PC-9 (cell line): ENCODE measurements at regions of chr6 and their contacts with region 1.

Region 1: DNA sequence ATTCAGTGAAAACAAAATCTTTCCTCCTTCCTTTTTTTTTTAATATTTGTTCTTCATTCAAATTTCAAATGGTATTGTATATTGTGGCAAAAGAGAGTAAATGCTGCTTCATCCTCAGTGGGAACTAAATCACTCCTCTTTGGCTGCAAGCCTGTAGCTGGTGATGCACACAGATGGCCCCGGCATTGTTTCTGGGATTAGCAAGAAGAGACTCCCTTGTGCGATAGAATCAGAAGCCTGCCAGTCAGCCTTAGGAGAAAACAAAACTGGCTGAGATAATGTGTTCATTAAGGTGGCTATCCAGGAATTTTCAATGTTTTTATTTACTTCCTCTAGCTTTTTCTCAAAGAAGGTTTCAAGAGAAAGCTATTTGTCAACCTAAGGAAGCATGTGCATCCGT is 20.7 kb upstream of the ELOVL2 start:
- DNase-seq: no peak
- H3K4me3 ChIP-seq: no peak overlapping the region
- H3K27ac ChIP-seq: no peak overlapping the region
- H3K4me1 ChIP-seq: no peaks in the 10 kb centered on the region
- H3K27me3 ChIP-seq: no peaks in the 10 kb centered on the region
- CTCF ChIP-seq: no peak

Region 2: GRCh38 chr6:9380568-9380967 is 1684.3 kb before region 1 on chr6:
- CTCF ChIA-PET with region 1: interaction called, 18 read pairs
- POLR2A ChIA-PET with region 1: no interaction called
- intact Hi-C with region 1: no loop called
- DNase-seq: no peak
- H3K4me3 ChIP-seq: no peak overlapping the region
- H3K27ac ChIP-seq: no peak overlapping the region
- H3K4me1 ChIP-seq: no peaks in the 10 kb centered on the region
- H3K27me3 ChIP-seq: no peaks in the 10 kb centered on the region
- CTCF ChIP-seq: no peak

Region 3: GRCh38 chr6:10478187-10479040 is 586.4 kb before region 1 on chr6:
- CTCF ChIA-PET with region 1: interaction called, 7 read pairs
- POLR2A ChIA-PET with region 1: no interaction called
- intact Hi-C with region 1: loop called (anchors 1 kb)
- DNase-seq: peak; percentile 8 to 37
- H3K4me3 ChIP-seq: no peak overlapping the region
- H3K27ac ChIP-seq: no peak overlapping the region
- H3K4me1 ChIP-seq: peaks cover 11% of the 10 kb centered on the region
- H3K27me3 ChIP-seq: no peaks in the 10 kb centered on the region
- CTCF ChIP-seq: peak; percentile 78

Region 4: GRCh38 chr6:10800829-10801535 is 263.9 kb before region 1 on chr6:
- CTCF ChIA-PET with region 1: no interaction called
- POLR2A ChIA-PET with region 1: no interaction called
- intact Hi-C with region 1: loop called (anchors 10 kb)
- DNase-seq: peak; percentile 66 to 70
- H3K4me3 ChIP-seq: no peak overlapping the region
- H3K27ac ChIP-seq: peak overlapping the region; percentile 41; the same call in 1 of the 2 replicates
- H3K4me1 ChIP-seq: peaks cover 8% of the 10 kb centered on the region
- H3K27me3 ChIP-seq: no peaks in the 10 kb centered on the region
- CTCF ChIP-seq: peak; percentile 94

Region 5: DNA sequence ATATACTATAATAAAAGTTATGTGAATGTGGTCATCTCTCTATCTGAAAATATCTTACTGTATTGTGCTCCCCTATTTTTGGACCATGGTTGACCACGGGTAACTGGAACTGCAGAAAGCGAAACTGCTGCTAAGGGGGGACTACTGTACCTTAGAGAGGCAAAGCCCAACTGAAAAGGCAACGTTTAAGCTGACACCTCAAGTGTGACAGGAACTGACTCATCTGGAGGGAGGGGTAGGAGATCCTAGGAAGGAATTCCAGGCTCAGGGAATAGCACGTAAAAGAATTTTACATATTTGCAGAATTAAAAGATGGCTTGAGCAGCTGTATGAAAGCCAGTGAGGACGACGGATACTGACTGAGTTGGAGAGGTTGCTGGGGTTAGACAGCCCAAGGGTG is 55.5 kb before region 1 on chr6:
- CTCF ChIA-PET with region 1: no interaction called
- POLR2A ChIA-PET with region 1: no interaction called
- intact Hi-C with region 1: loop called (anchors 2 kb)
- DNase-seq: peak in 1 of 2 experiments; percentile 13
- H3K4me3 ChIP-seq: no peak overlapping the region
- H3K27ac ChIP-seq: no peak overlapping the region
- H3K4me1 ChIP-seq: peaks cover 28% of the 10 kb centered on the region
- H3K27me3 ChIP-seq: no peaks in the 10 kb centered on the region
- CTCF ChIP-seq: no peak

Region 6: GRCh38 chr6:11575408-11576033 is 510.7 kb after region 1 on chr6:
- CTCF ChIA-PET with region 1: interaction called, 3 read pairs
- POLR2A ChIA-PET with region 1: no interaction called
- intact Hi-C with region 1: loop called (anchors 1 kb)
- DNase-seq: peak; percentile 75 to 86
- H3K4me3 ChIP-seq: no peak overlapping the region
- H3K27ac ChIP-seq: no peak overlapping the region
- H3K4me1 ChIP-seq: peaks cover 3% of the 10 kb centered on the region
- H3K27me3 ChIP-seq: no peaks in the 10 kb centered on the region
- CTCF ChIP-seq: peak; percentile 99

Region 7: DNA sequence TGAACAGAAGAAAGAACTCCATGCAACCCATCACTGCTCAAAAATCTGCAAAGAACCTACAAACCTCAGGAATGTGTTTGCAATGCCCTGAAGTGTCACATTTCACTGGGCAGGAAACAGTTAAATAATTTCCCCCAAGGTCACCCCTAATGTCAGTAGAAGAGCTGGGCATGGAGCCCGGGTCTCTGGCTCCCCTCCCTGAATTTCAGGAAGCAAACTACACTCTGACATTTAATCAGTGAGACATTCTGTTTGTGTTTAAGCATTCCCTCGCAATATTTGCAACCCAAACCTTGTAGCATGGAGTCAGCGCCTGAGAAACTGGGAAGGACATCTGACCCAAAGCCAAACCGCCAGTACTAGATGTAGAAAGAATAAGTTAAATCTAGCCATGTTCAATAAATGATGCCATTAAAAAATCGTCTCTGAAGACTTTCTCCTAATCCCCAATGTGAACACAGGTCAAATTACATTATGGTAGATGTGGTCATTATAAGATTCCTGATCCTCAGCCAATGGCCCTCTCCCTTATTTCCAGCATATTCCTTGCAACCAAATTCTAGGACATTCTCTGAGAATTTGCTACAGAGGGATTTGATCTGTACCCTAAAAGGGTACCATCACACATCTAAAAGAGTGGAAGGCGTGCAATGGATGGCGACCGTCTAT is 805.0 kb after region 1 on chr6:
- CTCF ChIA-PET with region 1: no interaction called
- POLR2A ChIA-PET with region 1: no interaction called
- intact Hi-C with region 1: no loop called
- DNase-seq: peak in 1 of 2 experiments; percentile 34
- H3K4me3 ChIP-seq: no peak overlapping the region
- H3K27ac ChIP-seq: no peak overlapping the region
- H3K4me1 ChIP-seq: 0 out of 2 replicates have a peak, but pooled peaks cover 9% of the 10 kb centered on the region
- H3K27me3 ChIP-seq: no peaks in the 10 kb centered on the region
- CTCF ChIP-seq: no peak